T-cell (primary cell): ENCODE measurements at regions of chr4 and their contacts with region 1.

Region 1: DNA sequence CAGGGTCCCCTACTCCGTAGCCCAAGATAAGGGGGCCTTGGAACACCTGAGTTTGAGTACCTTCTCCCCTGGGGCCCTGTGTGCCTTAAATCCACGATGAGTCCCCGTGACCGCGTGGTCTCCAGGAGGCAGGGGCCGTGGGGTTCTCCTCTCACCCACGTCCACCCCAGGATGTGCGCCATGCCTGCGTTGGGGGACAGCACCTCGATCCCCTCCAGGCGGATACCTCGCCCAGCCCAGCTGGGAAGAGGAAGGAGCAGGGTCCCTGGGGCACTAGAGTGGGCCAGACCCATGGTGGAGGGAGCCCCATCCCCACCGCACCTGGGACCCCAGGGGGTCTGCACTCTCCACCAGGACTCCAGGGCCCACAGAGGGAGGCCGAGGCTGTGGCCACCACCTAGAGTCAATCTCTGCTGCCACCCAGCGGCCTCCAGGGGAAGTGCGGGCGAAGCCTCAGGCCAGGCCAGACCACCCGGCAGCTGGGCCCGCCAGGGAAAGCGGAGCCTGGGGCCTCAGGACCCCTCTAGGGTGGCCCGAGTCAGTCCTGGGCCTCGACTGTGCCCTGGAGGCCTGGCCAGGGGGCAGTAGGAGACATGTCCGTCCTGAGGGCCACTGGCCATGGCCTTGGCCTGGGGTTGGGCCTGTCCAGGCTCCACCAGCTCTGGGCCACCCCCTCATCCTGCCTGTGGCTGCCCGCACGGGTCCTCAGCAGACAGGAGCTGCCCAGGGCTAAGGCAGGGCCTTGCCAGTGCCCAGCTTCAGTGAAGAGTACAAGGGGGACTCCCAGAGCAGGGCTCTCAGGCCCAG is 55.0 kb downstream of the FAM53A start:
- DNase-seq: peak in 33 of 35 experiments; percentile 24 to 74 (median 55)
- ATAC-seq: peak; percentile 79 to 89 (median 82)
- H3K4me3 ChIP-seq: no peak overlapping the region
- H3K4me3 Mint-ChIP-seq: no peak overlapping the region
- H3K27ac ChIP-seq: no peak overlapping the region
- H3K27ac Mint-ChIP-seq: no peak overlapping the region
- H3K4me1 ChIP-seq: peaks cover 0 to 9% of the 10 kb centered on the region in 2 experiments
- H3K4me1 Mint-ChIP-seq: no peaks in the 10 kb centered on the region
- H3K27me3 ChIP-seq: peaks cover 0 to 27% of the 10 kb centered on the region in 2 experiments
- H3K27me3 Mint-ChIP-seq: peaks cover 0 to 2% of the 10 kb centered on the region in 2 donors

Region 2: DNA sequence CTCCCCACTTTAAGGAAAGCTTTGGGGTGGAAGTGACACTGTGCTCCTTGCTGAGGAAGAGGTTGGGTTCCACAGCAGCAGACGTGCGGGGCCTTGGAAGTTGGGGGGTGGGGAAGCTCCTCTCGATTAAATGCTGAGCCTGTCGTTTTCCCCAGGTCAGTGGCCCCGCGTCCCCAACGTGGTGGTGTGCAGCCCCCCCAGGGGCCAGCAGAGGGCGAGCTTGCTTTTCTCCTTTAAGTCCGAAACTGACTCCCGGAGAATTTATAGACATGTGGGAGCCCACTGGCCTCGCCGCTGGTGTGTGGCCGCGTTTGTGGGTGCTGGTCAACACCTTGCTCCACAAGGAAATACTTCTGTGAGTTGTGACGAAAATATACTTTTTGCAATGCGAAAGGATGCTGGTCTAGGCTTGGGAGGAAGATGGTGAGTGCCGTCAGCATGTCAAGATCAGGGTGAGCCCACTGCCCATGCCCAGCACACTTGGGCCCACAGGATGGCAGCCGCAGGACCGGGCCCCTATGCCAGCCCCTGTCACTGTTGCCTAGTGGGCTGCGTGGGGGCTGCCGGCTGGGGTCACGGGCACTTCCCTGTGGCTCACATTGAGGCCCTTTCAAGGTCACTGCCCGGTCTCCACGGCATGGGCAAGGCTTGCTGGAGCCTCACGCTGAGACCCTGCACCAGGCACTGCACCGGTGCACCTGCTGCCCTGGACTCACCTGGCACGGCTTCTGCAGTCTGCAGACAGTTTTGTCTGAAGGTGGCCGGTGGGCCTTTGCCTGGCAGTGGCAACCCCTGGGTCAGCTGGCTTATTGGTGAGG is 272.7 kb before region 1 on chr4:
- CTCF ChIA-PET with region 1: interaction called in 1 of 2 experiments, 10 read pairs
- POLR2A ChIA-PET with region 1: no interaction called
- DNase-seq: peak in 27 of 35 experiments; percentile 13 to 64 (median 31)
- ATAC-seq: peak in 2 of 4 experiments; percentile 23 to 30
- H3K4me3 ChIP-seq: no peak overlapping the region
- H3K4me3 Mint-ChIP-seq: no peak overlapping the region
- H3K27ac ChIP-seq: no peak overlapping the region
- H3K27ac Mint-ChIP-seq: no peak overlapping the region
- H3K4me1 ChIP-seq: peaks cover 0 to 15% of the 10 kb centered on the region in 2 experiments
- H3K4me1 Mint-ChIP-seq: peaks cover 10 to 11% (median 11%) of the 10 kb centered on the region in 3 donors
- H3K27me3 ChIP-seq: no peaks in the 10 kb centered on the region
- H3K27me3 Mint-ChIP-seq: no peaks in the 10 kb centered on the region

Region 3: GRCh38 chr4:1646690-1647089 is 17.6 kb after region 1 on chr4:
- CTCF ChIA-PET with region 1: no interaction called
- POLR2A ChIA-PET with region 1: no interaction called
- DNase-seq: no peak
- ATAC-seq: no peak
- H3K4me3 ChIP-seq: no peak overlapping the region
- H3K4me3 Mint-ChIP-seq: no peak overlapping the region
- H3K27ac ChIP-seq: no peak overlapping the region
- H3K27ac Mint-ChIP-seq: no peak overlapping the region
- H3K4me1 ChIP-seq: peaks cover 0 to 6% of the 10 kb centered on the region in 2 experiments
- H3K4me1 Mint-ChIP-seq: peaks cover 4 to 8% (median 4%) of the 10 kb centered on the region in 3 donors
- H3K27me3 ChIP-seq: peaks cover 0 to under 1% of the 10 kb centered on the region in 2 experiments
- H3K27me3 Mint-ChIP-seq: no peaks in the 10 kb centered on the region